GM12878 (cell line): ENCODE measurements at regions of chr20 and their contacts with region 1.

Region 1: DNA sequence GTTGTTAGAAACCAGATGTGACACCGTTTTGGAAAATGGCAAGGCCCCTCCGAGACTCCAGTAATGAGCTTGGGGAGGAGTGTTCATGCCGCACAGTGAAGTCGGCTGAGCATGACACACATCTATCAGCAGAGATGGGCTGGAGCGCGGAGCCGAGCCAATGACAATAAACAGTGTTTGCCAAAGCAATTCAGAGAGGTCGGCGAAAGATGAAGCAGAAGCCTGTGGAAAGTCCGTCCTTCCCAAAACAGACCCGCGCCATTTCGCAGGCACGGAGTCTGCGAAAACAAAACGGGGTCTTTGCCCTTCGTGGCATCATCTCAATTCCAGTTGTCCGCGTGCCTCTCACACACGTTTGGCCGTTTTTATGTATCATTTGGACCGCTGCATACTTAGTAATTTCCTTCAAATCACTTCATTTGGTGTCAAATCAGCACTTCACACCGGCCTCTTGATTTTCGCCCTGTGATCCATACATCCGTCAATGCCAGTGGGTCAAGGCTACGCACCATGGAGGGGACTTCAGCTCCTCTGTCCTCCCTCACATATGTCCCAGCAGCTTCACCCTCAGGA is 71.3 kb downstream of the SULF2 start:
- DNase-seq: no peak
- ATAC-seq: no peak
- H3K4me3 ChIP-seq: no peak overlapping the region
- H3K27ac ChIP-seq: no peak overlapping the region
- H3K4me1 ChIP-seq: peaks cover 21% of the 10 kb centered on the region
- H3K27me3 ChIP-seq: no peaks in the 10 kb centered on the region
- CTCF ChIP-seq: no peak
- EP300 ChIP-seq: no peak
- POLR2A ChIP-seq: no peak
- RAD21 ChIP-seq: no peak

Region 2: DNA sequence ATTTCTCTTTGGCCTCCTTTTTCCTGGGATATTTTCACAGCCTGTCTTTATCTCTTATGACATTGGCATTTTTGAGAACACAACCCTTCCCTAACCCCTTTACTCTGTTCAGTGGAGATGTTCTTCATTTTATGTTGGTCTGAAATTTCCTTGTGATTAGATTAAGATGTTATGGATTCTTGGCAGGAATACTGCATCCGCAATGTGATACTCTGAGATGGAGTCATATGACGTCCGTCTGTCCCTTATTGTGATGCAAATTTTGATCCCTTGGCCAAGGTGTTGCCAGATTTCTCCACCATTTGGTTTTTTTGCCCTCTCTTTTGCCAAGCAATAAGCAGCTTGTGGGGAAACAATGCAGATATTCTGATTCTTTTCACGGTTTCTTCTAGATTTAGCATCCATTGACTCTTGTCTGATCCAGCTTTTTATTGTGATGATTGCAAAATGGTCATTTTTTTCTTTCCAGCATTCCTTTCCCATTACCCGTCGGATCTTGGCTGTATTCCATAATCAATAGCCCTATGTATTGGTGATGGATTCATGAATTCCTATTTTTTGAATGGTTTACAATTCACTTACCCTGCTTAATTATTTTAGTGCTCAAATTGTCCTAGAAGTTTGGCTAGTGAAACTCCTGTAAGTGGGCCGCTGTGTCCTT is 127.2 kb before region 1 on chr20:
- CTCF ChIA-PET with region 1: no interaction called
- POLR2A ChIA-PET with region 1: no interaction called
- RAD21 ChIA-PET with region 1: no interaction called
- SMC1A ChIA-PET with region 1: no interaction called
- in situ Hi-C with region 1: no loop called
- intact Hi-C with region 1: no loop called
- DNase-seq: no peak
- ATAC-seq: no peak
- H3K4me3 ChIP-seq: no peak overlapping the region
- H3K27ac ChIP-seq: no peak overlapping the region
- H3K4me1 ChIP-seq: peaks cover 21% of the 10 kb centered on the region
- H3K27me3 ChIP-seq: no peaks in the 10 kb centered on the region
- CTCF ChIP-seq: no peak
- EP300 ChIP-seq: no peak
- POLR2A ChIP-seq: no peak
- RAD21 ChIP-seq: no peak

Region 3: GRCh38 chr20:47663333-47664067 is 50.5 kb before region 1 on chr20:
- CTCF ChIA-PET with region 1: interaction called, 15 read pairs
- POLR2A ChIA-PET with region 1: no interaction called
- RAD21 ChIA-PET with region 1: interaction called, 3 read pairs
- SMC1A ChIA-PET with region 1: interaction called, 5 read pairs
- in situ Hi-C with region 1: no loop called
- intact Hi-C with region 1: no loop called
- DNase-seq: peak; percentile 19
- ATAC-seq: peak; percentile 83
- H3K4me3 ChIP-seq: no peak overlapping the region
- H3K27ac ChIP-seq: no peak overlapping the region
- H3K4me1 ChIP-seq: no peaks in the 10 kb centered on the region
- H3K27me3 ChIP-seq: no peaks in the 10 kb centered on the region
- CTCF ChIP-seq: peak; percentile 94 to 97 (median 97)
- EP300 ChIP-seq: no peak
- POLR2A ChIP-seq: peak; percentile 67
- RAD21 ChIP-seq: peak; percentile 78

Region 4: GRCh38 chr20:47876311-47877045 is 162.5 kb after region 1 on chr20:
- CTCF ChIA-PET with region 1: no interaction called
- POLR2A ChIA-PET with region 1: no interaction called
- RAD21 ChIA-PET with region 1: no interaction called
- SMC1A ChIA-PET with region 1: no interaction called
- in situ Hi-C with region 1: no loop called
- intact Hi-C with region 1: no loop called
- DNase-seq: no peak
- ATAC-seq: no peak
- H3K4me3 ChIP-seq: no peak overlapping the region
- H3K27ac ChIP-seq: no peak overlapping the region
- H3K4me1 ChIP-seq: no peaks in the 10 kb centered on the region
- H3K27me3 ChIP-seq: no peaks in the 10 kb centered on the region; a peak in 1 of 4 replicates
- CTCF ChIP-seq: no peak
- EP300 ChIP-seq: no peak
- POLR2A ChIP-seq: no peak
- RAD21 ChIP-seq: no peak